ENCODE measurements at regions of chr5 and their contacts with region 1.

Region 1: GRCh38 chr5:62448528-62448927 is 36.0 kb downstream of the IPO11 start:
- DNase-seq: no peak
- ATAC-seq: no peak
- H3K4me3 Mint-ChIP-seq: no peak overlapping the region
- H3K27ac Mint-ChIP-seq: no peak overlapping the region
- H3K4me1 Mint-ChIP-seq: no peaks in the 10 kb centered on the region
- H3K27me3 Mint-ChIP-seq: no peaks in the 10 kb centered on the region
- CTCF ChIP-seq: no peak

Region 2: GRCh38 chr5:62412537-62413329 is 35.8 kb before region 1 on chr5 and contains the start of gene IPO11:
- CTCF ChIA-PET with region 1: interaction called, 10 read pairs
- POLR2A ChIA-PET with region 1: no interaction called
- DNase-seq: peak; percentile 99
- ATAC-seq: peak; percentile 99
- H3K4me3 Mint-ChIP-seq: peak within 1 kb of the TSS; percentile 88
- H3K27ac Mint-ChIP-seq: peak within 1 kb of the TSS; percentile 91
- H3K4me1 Mint-ChIP-seq: peaks cover 7% of the 10 kb centered on the region
- H3K27me3 Mint-ChIP-seq: peaks cover 4% of the 10 kb centered on the region
- CTCF ChIP-seq: no peak
- total RNA-seq, gene IPO11: 52.6 to 61.9 TPM (median 60.0 TPM) in 3 replicates

Region 3: GRCh38 chr5:62431735-62432620 is 16.6 kb before region 1 on chr5:
- CTCF ChIA-PET with region 1: interaction called, 20 read pairs
- POLR2A ChIA-PET with region 1: no interaction called
- DNase-seq: no peak
- ATAC-seq: peak; percentile 39; the same call in 1 of the 2 replicates
- H3K4me3 Mint-ChIP-seq: no peak overlapping the region
- H3K27ac Mint-ChIP-seq: peak overlapping the region; percentile 19
- H3K4me1 Mint-ChIP-seq: no peaks in the 10 kb centered on the region
- H3K27me3 Mint-ChIP-seq: no peaks in the 10 kb centered on the region
- CTCF ChIP-seq: no peak